Colonic mucosa (tissue), 4 donors: ENCODE measurements at regions of chr11 and their contacts with region 1.

Region 1: DNA sequence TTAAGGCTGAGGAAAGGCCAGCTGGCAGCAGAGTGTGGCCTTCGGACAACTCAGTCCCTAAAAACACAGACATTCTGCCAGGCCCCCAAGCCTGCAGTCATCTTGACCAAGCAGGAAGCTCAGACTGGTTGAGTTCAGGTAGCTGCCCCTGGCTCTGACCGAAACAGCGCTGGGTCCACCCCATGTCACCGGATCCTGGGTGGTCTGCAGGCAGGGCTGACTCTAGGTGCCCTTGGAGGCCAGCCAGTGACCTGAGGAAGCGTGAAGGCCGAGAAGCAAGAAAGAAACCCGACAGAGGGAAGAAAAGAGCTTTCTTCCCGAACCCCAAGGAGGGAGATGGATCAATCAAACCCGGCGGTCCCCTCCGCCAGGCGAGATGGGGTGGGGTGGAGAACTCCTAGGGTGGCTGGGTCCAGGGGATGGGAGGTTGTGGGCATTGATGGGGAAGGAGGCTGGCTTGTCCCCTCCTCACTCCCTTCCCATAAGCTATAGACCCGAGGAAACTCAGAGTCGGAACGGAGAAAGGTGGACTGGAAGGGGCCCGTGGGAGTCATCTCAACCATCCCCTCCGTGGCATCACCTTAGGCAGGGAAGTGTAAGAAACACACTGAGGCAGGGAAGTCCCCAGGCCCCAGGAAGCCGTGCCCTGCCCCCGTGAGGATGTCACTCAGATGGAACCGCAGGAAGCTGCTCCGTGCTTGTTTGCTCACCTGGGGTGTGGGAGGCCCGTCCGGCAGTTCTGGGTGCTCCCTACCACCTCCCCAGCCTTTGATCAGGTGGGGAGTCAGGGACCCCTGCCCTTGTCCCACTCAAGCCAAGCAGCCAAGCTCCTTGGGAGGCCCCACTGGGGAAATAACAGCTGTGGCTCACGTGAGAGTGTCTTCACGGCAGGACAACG is 11.7 kb downstream of the CXCR5 start:
- DNase-seq: no peak
- H3K4me3 ChIP-seq: no peak overlapping the region
- H3K27ac ChIP-seq: peak overlapping the region; percentile 36
- H3K4me1 ChIP-seq: no peaks in the 10 kb centered on the region
- H3K27me3 ChIP-seq: no peaks in the 10 kb centered on the region
- CTCF ChIP-seq: no peak

Region 2: DNA sequence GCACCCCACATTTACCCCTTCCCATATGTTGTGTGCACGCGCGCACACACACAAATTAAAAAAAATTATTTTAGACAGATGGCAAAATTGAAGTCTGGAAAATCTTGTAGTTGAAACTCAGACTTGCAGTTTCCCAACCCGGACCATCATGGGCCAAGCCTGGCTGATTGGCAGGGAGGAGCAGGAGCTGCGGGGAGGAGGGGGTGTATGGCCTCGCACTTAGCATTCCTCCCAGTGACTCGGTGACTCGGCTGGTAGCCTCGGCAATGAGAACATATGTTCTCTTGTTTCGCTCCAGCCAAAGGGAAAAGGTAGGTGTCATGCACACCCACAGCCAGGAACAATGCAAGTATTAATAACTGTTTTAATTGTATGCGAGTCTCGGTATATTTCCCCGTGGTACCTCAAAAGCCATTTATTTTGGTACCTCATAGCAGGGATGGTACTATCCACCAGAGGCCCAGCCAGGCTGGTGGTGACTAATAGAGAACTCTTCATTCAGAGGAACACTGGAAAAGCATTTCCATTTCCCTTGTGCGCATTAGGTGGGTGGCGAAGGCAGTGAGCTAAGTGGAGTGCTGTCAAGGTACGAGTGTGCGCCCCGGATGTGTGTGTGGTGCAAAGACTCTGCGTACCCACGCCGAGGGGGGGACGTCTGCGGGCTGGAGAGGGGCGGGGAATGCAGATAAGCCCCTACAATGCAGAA is 1190.8 kb before region 1 on chr11:
- intact Hi-C with region 1: no loop called
- DNase-seq: no peak
- H3K4me3 ChIP-seq: no peak overlapping the region
- H3K27ac ChIP-seq: no peak overlapping the region
- H3K4me1 ChIP-seq: no peaks in the 10 kb centered on the region
- H3K27me3 ChIP-seq: no peaks in the 10 kb centered on the region
- CTCF ChIP-seq: no peak

Region 3: DNA sequence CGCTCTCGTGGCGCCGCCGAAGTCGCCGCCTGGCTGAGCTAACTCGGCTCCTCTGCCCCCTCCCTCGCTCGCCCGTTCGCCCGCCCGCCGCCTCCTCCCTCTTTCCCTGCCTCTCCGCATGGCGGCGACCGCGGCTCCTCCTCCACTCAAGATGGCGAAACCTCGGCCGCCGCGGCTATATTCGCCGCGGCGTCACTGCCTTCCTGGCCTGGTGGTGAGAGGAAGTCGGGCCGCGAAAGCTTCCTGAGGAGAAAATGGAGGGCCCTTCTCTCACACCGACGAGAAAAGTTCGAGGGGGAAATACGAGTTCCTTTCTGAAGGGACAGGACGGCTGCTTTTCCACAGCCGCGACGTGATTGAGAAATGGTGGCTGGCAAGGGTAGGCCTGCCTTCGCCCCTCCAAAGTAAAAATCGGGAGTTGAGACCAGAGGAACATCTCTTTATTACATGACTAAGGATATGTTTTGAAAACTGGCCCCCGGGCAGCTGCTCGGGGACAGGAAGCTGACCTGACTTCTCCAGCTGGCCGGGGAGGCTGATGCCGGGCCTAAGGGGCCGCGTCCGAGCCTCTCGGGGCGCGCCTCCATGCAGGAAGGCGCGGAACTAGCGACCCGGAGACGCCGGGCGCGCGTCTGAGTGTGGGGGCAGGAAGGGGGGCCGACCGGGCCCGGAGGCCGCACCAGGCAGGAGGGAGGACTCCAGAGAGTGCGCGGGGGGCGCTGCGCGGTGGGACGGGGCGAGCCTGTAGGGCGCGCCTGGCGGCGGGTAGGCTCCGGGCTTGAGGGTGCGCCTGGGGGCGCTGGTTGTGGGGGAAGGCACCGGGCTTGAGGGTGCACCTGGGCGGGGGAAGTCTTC is 104.1 kb before region 1 on chr11 and contains the start of gene DDX6:
- intact Hi-C with region 1: loop called (anchors 10 kb)
- DNase-seq: peak; percentile 88
- H3K4me3 ChIP-seq: peak within 1 kb of the TSS; percentile 85
- H3K27ac ChIP-seq: peak within 1 kb of the TSS; percentile 93
- H3K4me1 ChIP-seq: peaks cover 12% of the 10 kb centered on the region
- H3K27me3 ChIP-seq: no peaks in the 10 kb centered on the region
- CTCF ChIP-seq: no peak
- total RNA-seq, gene DDX6: 79.0 to 108 TPM